ENCODE measurements at regions of chr7 and their contacts with region 1.

Region 1: GRCh38 chr7:65981965-65982792 is at the start of gene GUSB:
- DNase-seq: peak; percentile 80 to 91 (median 86)
- ATAC-seq: peak; percentile 87
- H3K4me3 ChIP-seq: peak within 1 kb of the TSS; percentile 88
- H3K4me3 Mint-ChIP-seq: peak within 1 kb of the TSS; percentile 76 to 91 (median 80)
- H3K27ac ChIP-seq: peak within 1 kb of the TSS; percentile 78
- H3K27ac Mint-ChIP-seq: peak within 1 kb of the TSS; percentile 36 to 91 (median 64)
- H3K4me1 ChIP-seq: peaks cover 15 to 19% of the 10 kb centered on the region in 2 donors
- H3K4me1 Mint-ChIP-seq: peaks cover 0 to 21% (median 10%) of the 10 kb centered on the region in 7 donors
- H3K27me3 ChIP-seq: no peaks in the 10 kb centered on the region
- H3K27me3 Mint-ChIP-seq: no peaks in the 10 kb centered on the region
- total RNA-seq, gene GUSB: 41.8 to 62.5 (median 53.3) TPM

Region 2: GRCh38 chr7:64902806-64903721 is 1079.1 kb before region 1 on chr7 and contains the start of gene ZNF273:
- CTCF ChIA-PET with region 1: no interaction called
- POLR2A ChIA-PET with region 1: no interaction called
- intact Hi-C with region 1: loop called in 1 of 2 experiments (anchors 5 kb)
- DNase-seq: peak; percentile 72 to 94 (median 90)
- ATAC-seq: peak; percentile 100
- H3K4me3 ChIP-seq: peak within 1 kb of the TSS; percentile 95
- H3K4me3 Mint-ChIP-seq: peak within 1 kb of the TSS; percentile 95 to 98 (median 95)
- H3K27ac ChIP-seq: peak within 1 kb of the TSS; percentile 83
- H3K27ac Mint-ChIP-seq: peak within 1 kb of the TSS; percentile 92 to 97 (median 95)
- H3K4me1 ChIP-seq: peaks cover 7 to 14% of the 10 kb centered on the region in 2 donors
- H3K4me1 Mint-ChIP-seq: peaks cover 36 to 55% (median 50%) of the 10 kb centered on the region in 7 donors
- H3K27me3 ChIP-seq: no peaks in the 10 kb centered on the region
- H3K27me3 Mint-ChIP-seq: no peaks in the 10 kb centered on the region
- total RNA-seq, gene ZNF273: 3.8 to 10.9 (median 7.5) TPM

Region 3: DNA sequence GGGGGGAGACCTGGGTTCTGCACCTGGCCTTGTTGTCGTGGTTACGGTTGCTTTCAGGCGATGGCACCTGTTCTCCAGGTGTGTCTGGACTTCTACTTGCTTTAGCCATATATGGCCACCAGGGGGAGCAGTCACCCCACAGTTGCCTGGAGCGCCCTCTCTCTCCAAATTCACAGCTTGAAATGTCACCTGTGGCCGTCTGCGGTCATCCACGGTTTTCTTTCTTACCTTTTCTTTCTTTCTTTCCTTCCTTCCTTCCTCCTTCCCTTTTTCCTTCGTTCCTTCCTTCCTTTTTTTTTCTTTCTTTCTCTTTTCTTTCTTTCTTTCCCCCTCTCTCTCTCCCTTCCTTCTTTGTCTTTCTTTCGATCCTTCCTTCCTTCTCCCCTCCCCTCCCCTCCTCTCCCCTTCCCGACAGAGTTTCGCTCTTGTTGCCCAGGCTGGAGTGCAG is 259.8 kb before region 1 on chr7:
- CTCF ChIA-PET with region 1: no interaction called
- POLR2A ChIA-PET with region 1: no interaction called
- intact Hi-C with region 1: loop called (anchors 1 to 5 kb)
- DNase-seq: peak; percentile 47 to 75 (median 67)
- ATAC-seq: peak; percentile 93
- H3K4me3 ChIP-seq: no peak overlapping the region
- H3K4me3 Mint-ChIP-seq: peak overlapping the region in 3 of 10 donors; percentile 15 to 56 (median 25)
- H3K27ac ChIP-seq: no peak overlapping the region
- H3K27ac Mint-ChIP-seq: peak overlapping the region in 1 of 9 donors; percentile 47
- H3K4me1 ChIP-seq: no peaks in the 10 kb centered on the region
- H3K4me1 Mint-ChIP-seq: peaks cover 0 to 5% (median 0%) of the 10 kb centered on the region in 7 donors
- H3K27me3 ChIP-seq: no peaks in the 10 kb centered on the region
- H3K27me3 Mint-ChIP-seq: no peaks in the 10 kb centered on the region

Region 4: DNA sequence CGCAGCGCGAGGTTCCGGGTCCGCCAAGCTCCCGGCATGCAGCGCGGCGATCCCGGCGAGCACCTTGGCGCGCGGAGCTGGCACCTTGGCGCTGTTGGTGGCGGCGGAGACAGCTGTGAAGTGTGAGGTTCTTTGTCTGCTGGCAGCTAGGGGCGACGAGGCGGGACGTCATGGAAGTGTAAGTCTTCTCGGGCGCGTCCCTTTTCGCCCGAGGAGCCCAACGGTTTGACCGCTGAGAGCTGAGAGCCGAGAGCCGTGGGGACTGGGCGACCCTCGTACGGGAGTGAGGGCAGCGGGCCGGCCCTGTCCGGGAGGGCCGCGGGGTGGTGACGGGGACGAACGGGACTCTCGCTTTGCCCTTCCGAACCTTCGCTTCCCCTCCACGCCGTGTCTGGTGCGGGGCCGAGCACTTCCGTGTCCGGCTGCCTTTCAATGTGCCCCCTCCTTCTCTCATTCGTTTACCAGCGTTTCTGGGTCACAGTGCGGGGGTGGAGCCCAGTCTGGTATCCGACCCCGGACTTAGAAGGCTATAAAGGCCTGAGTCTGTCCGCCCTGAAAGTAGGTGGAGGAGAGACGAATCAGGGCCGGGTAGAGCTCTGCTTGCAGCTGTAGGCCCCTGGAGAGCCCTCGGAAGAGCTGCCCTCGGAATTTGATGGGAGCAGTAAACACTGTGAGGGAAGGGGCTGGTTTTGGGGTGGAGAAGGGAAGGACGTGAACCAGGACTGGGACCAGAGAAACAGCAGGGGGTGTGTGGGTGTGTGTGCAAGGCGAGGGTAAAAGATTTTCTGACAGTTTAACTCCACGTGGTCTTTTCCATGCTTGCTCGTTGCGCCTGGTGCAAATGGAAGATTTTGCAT is 132.8 kb after region 1 on chr7 and contains the start of gene CRCP:
- CTCF ChIA-PET with region 1: no interaction called
- POLR2A ChIA-PET with region 1: no interaction called
- intact Hi-C with region 1: loop called (anchors 2 kb)
- DNase-seq: peak; percentile 78 to 87 (median 83)
- ATAC-seq: peak; percentile 94
- H3K4me3 ChIP-seq: peak within 1 kb of the TSS; percentile 87
- H3K4me3 Mint-ChIP-seq: peak within 1 kb of the TSS; percentile 94 to 98 (median 96)
- H3K27ac ChIP-seq: peak within 1 kb of the TSS; percentile 95
- H3K27ac Mint-ChIP-seq: peak within 1 kb of the TSS; percentile 94 to 98 (median 96)
- H3K4me1 ChIP-seq: peaks cover 14 to 26% of the 10 kb centered on the region in 2 donors
- H3K4me1 Mint-ChIP-seq: peaks cover 28 to 56% (median 47%) of the 10 kb centered on the region in 7 donors
- H3K27me3 ChIP-seq: no peaks in the 10 kb centered on the region
- H3K27me3 Mint-ChIP-seq: no peaks in the 10 kb centered on the region
- total RNA-seq, gene CRCP: 29.8 to 37.9 (median 34.0) TPM

Region 5: GRCh38 chr7:66654123-66654732 is 672.0 kb after region 1 on chr7:
- CTCF ChIA-PET with region 1: no interaction called
- POLR2A ChIA-PET with region 1: no interaction called
- intact Hi-C with region 1: loop called in 1 of 2 experiments (anchors 1 kb)
- DNase-seq: peak; percentile 96 to 99 (median 97)
- ATAC-seq: peak; percentile 95
- H3K4me3 ChIP-seq: peak overlapping the region; percentile 94
- H3K4me3 Mint-ChIP-seq: peak overlapping the region; percentile 91 to 99 (median 98)
- H3K27ac ChIP-seq: peak overlapping the region; percentile 99
- H3K27ac Mint-ChIP-seq: peak overlapping the region; percentile 94 to 99 (median 98)
- H3K4me1 ChIP-seq: peaks cover 8% of the 10 kb centered on the region in 2 donors
- H3K4me1 Mint-ChIP-seq: peaks cover 17 to 56% (median 39%) of the 10 kb centered on the region in 7 donors
- H3K27me3 ChIP-seq: no peaks in the 10 kb centered on the region
- H3K27me3 Mint-ChIP-seq: no peaks in the 10 kb centered on the region

Region 6: DNA sequence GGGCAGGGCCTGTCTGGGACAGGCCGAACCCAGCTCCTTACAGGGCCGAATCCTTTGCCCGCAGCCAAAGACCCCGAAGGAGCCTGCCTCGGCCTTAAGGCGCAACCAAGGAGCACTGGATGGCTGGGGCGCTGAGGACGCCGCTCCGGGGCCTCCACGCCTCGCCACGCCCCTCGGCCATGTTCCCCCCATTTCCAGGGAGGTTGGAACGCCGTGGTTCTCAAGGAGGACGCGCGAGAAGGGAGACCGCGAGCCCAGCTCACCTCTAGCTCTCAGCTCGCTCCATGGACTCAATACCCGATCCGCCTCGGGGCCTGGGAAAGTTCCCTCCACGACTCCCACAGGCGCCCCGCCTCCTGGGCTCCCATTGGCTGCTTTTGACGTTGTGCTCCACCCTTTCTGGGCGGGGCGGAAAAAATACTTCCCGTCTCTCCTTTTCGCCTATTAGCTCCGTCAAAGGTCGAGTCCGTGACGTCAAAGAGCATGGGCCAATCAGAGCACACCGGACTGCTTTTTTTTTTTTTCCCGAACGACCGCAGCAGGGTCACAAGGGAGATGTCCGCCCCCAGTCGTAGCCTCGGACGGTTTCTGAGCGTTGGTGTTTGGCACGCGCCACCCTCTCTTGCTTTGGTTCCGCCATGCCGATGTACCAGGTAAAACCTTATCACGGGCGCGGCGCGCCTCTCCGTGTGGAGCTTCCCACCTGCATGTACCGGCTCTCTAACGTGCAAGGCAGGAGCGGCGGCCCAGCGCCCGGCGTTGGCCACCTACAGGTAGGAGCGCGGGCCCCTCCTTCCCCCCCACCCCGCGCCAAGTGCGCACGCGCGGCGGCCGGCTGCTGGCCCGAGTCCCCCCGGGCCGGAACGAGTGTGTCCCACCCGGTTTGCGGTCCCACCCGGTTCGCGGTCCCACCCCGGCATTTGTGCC is 1320.2 kb after region 1 on chr7:
- CTCF ChIA-PET with region 1: no interaction called
- POLR2A ChIA-PET with region 1: no interaction called
- intact Hi-C with region 1: loop called (anchors 5 kb)
- DNase-seq: peak; percentile 90 to 97 (median 95)
- ATAC-seq: peak; percentile 89
- H3K4me3 ChIP-seq: peak overlapping the region; percentile 74
- H3K4me3 Mint-ChIP-seq: peak overlapping the region; percentile 89 to 99 (median 96)
- H3K27ac ChIP-seq: peak overlapping the region; percentile 88
- H3K27ac Mint-ChIP-seq: peak overlapping the region; percentile 87 to 99 (median 98)
- H3K4me1 ChIP-seq: peaks cover 3 to 7% of the 10 kb centered on the region in 2 donors
- H3K4me1 Mint-ChIP-seq: peaks cover 10 to 36% (median 25%) of the 10 kb centered on the region in 7 donors
- H3K27me3 ChIP-seq: no peaks in the 10 kb centered on the region
- H3K27me3 Mint-ChIP-seq: no peaks in the 10 kb centered on the region